ENCODE measurements at regions of chr22 and their contacts with region 1.

Region 1: GRCh38 chr22:38230108-38230825 is 28.5 kb downstream of the MAFF start:
- DNase-seq: peak in 1 of 3 donors; percentile 51
- ATAC-seq: peak; percentile 57 to 75 (median 70)
- H3K4me3 ChIP-seq: no peak overlapping the region
- H3K27ac ChIP-seq: no peak overlapping the region
- H3K4me1 ChIP-seq: peaks cover 0 to 6% (median 3%) of the 10 kb centered on the region in 4 donors
- H3K27me3 ChIP-seq: no peaks in the 10 kb centered on the region
- CTCF ChIP-seq: peak; percentile 42 to 52 (median 50)
- POLR2A ChIP-seq: no peak

Region 2: GRCh38 chr22:38104084-38104483 is 126.2 kb before region 1 on chr22:
- intact Hi-C with region 1: loop called in 1 of 2 experiments (anchors 10 kb)
- DNase-seq: no peak
- ATAC-seq: no peak
- H3K4me3 ChIP-seq: no peak overlapping the region
- H3K27ac ChIP-seq: no peak overlapping the region
- H3K4me1 ChIP-seq: peaks cover 0 to 15% (median 6%) of the 10 kb centered on the region in 4 donors
- H3K27me3 ChIP-seq: no peaks in the 10 kb centered on the region
- CTCF ChIP-seq: peak in 3 of 4 donors; percentile 14 to 24 (median 17)
- POLR2A ChIP-seq: no peak

Region 3: DNA sequence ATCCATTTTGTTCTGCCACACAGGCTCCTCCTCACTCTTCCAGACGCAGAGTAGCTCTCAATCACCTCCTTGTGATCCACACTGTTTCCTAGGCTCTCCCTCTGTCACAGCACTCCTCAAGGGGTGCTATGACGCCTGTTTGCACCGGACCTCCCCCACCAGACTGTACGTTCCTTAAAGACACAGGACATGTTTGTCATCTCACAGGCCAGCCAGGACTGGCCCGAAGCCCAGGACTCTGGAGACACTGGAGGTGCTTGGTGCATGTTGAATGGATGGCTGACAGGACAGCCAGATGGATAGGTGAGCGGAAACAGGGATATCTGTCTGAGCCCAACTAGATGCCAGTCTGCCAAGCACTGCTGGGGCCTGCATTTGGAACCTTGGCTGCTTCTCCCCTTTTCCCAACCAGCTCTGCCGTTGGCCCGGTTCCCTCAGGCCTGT is 62.3 kb before region 1 on chr22:
- intact Hi-C with region 1: loop called in 1 of 2 experiments (anchors 10 kb)
- DNase-seq: peak in 1 of 3 donors; percentile 56
- ATAC-seq: peak in 1 of 4 donors; percentile 4
- H3K4me3 ChIP-seq: no peak overlapping the region
- H3K27ac ChIP-seq: peak overlapping the region in 1 of 3 donors; percentile 13
- H3K4me1 ChIP-seq: peaks cover 0 to 44% (median 22%) of the 10 kb centered on the region in 4 donors
- H3K27me3 ChIP-seq: no peaks in the 10 kb centered on the region
- CTCF ChIP-seq: no peak
- POLR2A ChIP-seq: no peak

Measured in right lobe of liver (tissue), 6 donors.